ENCODE measurements at regions of chr2 and their contacts with region 1.

Region 1: DNA sequence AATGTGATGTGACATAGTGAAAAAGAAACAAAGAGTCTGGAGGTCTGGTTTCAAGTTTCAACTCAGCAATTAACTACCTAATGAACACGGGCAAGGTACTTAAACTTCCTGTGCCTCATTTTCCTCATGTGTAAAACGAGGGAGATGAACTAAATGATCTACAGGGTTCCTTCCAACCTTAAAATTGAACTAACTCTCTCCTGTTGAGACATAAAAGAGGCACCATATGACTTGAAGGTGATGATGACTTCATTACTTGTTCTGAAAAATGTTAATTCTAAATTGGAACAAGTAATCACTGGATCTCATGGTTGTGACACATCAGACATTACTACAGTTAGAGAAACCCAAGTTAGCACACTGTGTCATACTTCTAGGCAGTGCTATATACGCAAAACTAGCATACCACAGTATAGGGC is 8.9 kb upstream of the REL start:
- DNase-seq: no peak
- H3K4me3 Mint-ChIP-seq: no peak overlapping the region
- H3K27ac Mint-ChIP-seq: peak overlapping the region; percentile 51
- H3K4me1 Mint-ChIP-seq: peaks cover 22% of the 10 kb centered on the region
- H3K27me3 Mint-ChIP-seq: no peaks in the 10 kb centered on the region

Region 2: GRCh38 chr2:60674524-60675165 is 197.9 kb before region 1 on chr2:
- intact Hi-C with region 1: no loop called
- DNase-seq: peak; percentile 93
- H3K4me3 Mint-ChIP-seq: no peak overlapping the region
- H3K27ac Mint-ChIP-seq: no peak overlapping the region
- H3K4me1 Mint-ChIP-seq: peaks cover 3% of the 10 kb centered on the region
- H3K27me3 Mint-ChIP-seq: peaks cover 2% of the 10 kb centered on the region

Region 3: GRCh38 chr2:60899230-60899891 is 26.8 kb after region 1 on chr2:
- intact Hi-C with region 1: loop called (anchors 1 kb)
- DNase-seq: no peak
- H3K4me3 Mint-ChIP-seq: peak overlapping the region; percentile 58
- H3K27ac Mint-ChIP-seq: peak overlapping the region; percentile 90
- H3K4me1 Mint-ChIP-seq: peaks cover 37% of the 10 kb centered on the region
- H3K27me3 Mint-ChIP-seq: no peaks in the 10 kb centered on the region

Measured in activated CD4-positive, alpha-beta T cell treated with anti-CD3 and anti-CD28 coated beads, Interleukin-2, amount 10 ng/mL, durations not matched to agents 24 days and 14 days (primary cell).